ENCODE measurements at regions of chrX and their contacts with region 1.

Region 1: GRCh38 chrX:47233337-47234113 is 716 bp downstream of the USP11 start:
- DNase-seq: peak; percentile 84
- CTCF ChIP-seq: no peak

Region 2: DNA sequence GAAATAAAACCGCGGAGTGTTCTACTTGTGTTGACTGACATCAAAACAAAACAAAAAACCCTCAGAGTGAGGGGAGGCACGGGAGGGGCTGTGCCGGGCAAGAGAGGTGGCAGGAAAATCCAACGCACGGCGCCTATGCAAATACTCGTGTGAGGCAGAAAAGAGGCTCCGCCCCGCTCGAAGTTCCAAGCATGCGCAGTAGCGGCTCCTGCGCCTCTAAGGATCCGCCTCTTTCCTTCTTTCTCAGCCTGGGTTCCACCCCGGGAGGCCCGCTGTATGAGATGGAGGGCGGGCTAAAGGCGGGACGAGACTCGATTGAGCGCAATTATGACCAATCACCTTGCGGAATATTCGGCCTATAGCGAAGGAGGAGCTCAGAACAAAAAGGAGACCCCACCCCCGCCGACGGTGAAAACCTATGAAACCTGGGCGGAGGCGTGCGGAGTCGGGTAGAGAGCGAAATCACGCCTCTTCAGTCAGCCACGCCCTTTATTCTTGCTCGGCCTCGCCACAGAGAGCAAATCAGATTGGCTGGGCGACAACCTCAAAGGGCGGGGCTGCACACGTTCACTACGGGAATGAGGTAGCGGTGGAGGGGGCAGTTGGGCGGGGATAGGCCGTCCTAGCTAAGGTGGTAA is 15.8 kb before region 1 on chrX:
- CTCF ChIA-PET with region 1: no interaction called
- POLR2A ChIA-PET with region 1: interaction called, 20 read pairs
- DNase-seq: peak; percentile 88
- CTCF ChIP-seq: no peak

Region 3: DNA sequence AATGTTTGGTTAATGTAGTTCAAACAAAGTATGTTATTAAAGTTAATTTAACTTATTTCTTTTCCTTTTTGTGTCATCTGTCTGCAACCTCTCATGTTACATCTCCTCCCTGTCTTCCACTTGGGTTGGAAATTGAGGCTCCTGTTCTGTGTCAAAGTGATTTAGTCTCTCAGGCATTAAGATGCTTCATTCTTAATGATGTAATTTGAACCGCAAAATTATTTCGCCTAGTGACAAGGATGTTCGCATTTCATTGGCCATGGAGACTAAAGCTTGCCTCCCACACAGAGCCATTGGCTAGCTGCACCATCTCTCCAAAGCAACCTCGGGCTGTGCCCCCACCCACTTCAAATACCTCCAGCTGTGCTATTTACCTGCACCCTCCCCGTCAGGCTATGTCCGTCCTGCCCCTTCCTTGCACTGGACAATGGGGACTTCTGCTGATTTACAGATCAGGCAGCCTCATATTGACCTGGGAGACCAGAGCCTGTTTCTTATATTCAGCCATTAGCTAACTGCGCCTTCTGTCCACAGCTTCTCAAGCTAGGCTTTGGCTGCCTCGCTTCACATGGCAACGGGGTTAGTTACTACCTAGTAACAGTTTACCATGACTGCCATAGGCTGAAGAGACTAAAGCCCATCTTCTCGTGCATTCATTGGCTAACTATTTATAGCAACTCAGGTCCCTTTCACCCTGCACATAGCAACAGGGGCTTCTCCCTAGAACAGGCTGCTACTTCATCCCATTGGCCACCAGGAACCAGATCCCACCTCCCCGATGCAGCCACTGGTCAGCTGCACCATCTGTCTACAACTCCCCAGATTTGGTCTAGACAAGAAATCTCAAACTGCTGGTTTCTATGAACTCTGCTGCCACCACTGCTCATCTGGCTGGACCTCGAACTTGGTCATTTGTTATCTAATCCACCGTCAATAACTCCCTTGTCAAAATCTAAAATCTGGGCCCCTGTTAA is 128.3 kb after region 1 on chrX:
- CTCF ChIA-PET with region 1: no interaction called
- POLR2A ChIA-PET with region 1: interaction called, 10 read pairs
- DNase-seq: peak; percentile 85
- CTCF ChIP-seq: peak; percentile 13